ENCODE measurements at regions of chr3 and their contacts with region 1.

Region 1: DNA sequence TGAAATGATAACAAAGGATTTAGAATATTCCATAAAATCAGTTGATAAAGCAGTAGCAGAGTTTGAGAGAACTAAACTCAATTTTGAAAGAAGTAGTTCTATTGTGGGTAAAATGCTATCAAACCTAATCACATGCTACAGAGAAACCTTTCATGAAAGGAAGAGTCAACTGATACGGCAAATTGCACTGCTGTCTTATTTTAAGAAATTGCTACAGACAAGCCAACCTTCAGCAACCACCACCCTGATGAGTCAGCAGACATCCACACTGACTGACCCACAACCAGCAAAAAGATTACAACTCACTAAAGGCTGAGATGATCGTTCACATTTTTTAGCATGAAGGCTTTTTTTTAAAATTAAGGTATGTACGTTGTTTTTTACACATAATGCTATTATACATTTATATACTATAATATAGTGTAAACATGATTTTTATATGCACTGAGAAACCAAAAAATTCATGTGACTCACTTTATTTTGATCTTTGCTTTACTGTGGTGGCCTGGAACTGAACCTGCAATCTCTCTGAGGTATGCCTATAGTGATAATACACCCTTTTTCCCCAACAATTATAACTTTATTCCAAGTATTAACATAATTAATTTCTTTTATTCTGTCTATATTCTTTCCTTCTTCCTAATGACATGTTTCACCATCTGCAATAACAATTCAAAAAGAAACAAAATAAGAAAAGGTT is 109.9 kb downstream of the TBC1D5 start:
- DNase-seq: peak; percentile 26
- H3K4me3 ChIP-seq: no peak overlapping the region
- H3K27ac ChIP-seq: no peak overlapping the region
- H3K27me3 ChIP-seq: no peaks in the 10 kb centered on the region
- CTCF ChIP-seq: no peak

Region 2: GRCh38 chr3:18179521-18179920 is 547.0 kb after region 1 on chr3:
- CTCF ChIA-PET with region 1: interaction called, 11 read pairs
- POLR2A ChIA-PET with region 1: no interaction called
- DNase-seq: no peak
- H3K4me3 ChIP-seq: no peak overlapping the region
- H3K27ac ChIP-seq: no peak overlapping the region
- H3K27me3 ChIP-seq: no peaks in the 10 kb centered on the region
- CTCF ChIP-seq: no peak